HAP-1 (cell line): ENCODE measurements at regions of chr4 and their contacts with region 1.

Region 1: DNA sequence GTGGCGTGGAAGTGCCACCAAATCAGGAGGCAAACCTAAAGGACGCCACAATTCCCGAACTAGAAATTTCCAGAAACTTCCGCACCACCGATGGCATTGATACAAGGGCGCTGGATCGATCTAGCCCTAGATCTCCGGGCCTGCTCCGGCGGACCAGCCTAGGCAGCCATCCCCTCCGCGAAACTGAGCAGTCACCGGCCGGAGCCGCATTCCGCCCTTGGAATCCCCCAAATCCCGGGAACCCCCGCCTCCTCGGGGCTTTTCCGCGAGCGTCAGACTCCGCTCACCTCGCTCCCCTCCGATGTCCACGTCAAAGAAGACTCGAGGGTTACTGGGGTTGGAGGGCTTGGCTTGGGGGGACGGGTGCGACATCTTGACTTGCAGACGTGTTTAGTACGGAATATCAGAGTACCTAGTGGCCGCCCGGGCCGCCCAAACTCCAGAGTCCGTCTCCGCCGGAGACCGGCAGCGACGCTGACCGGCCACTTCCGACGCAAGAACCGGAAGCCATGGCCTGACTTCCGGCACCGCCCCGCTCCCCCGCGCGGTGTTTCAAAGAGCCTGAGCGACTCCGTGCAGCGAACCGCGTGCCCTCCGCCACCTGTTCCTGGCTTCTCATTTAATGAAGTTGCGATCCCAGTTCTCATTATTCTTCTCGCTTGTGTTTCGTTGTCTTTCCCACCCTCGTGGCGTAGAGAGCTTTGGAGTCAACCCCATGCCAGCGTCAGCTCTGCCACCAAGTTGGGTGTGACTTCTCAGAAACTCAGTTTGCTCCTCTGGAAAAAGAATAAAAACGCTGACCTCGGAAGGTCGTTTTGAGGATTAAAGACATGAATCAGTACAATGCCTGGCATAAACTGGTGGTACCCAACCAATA is at the start of gene PPID:
- DNase-seq: peak; percentile 72 to 90
- H3K4me3 ChIP-seq: peak within 1 kb of the TSS; percentile 89
- H3K4me1 ChIP-seq: peaks cover 10% of the 10 kb centered on the region
- H3K27me3 ChIP-seq: no peaks in the 10 kb centered on the region

Region 2: DNA sequence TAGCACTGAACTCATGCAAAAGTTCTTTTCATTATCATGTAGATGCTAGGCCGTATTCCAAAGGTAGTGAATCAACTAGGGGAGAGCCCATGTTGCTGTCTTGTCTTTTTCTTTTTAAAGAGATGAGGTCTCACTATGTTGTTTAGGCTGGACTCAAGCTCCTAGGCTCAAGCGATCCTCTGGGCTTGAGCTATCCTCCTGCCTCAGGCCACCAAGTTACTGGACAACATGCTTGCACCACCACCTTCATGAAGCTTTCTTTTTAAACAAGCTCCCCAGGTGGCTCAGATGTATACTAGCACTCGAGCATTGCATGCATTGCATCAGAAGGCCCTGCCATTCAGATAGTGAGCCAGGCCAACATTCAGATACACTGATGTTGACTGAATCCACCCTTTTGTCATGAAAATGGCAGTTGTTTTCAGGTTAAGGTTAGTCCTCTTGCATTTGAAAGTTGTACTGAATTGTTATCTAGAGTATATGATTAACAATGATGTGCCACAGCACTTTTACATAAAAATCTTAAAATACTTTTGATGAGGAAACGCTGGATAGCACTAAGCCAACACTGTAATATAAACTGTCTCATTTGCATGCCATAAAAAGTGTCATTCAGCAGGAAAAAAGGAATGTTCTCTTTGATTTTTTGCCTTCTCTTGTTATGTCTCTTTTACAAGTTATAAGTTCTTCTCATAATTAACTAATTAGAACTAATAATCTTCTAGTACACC is 122.3 kb after region 1 on chr4:
- in situ Hi-C with region 1: loop called (anchors 10 kb)
- DNase-seq: peak; percentile 67 to 77
- H3K4me3 ChIP-seq: no peak overlapping the region
- H3K4me1 ChIP-seq: peaks cover 17% of the 10 kb centered on the region
- H3K27me3 ChIP-seq: no peaks in the 10 kb centered on the region

Region 3: GRCh38 chr4:158873795-158874401 is 150.7 kb after region 1 on chr4:
- in situ Hi-C with region 1: no loop called
- DNase-seq: no peak
- H3K4me3 ChIP-seq: no peak overlapping the region
- H3K4me1 ChIP-seq: no peaks in the 10 kb centered on the region
- H3K27me3 ChIP-seq: no peaks in the 10 kb centered on the region

Region 4: GRCh38 chr4:159206427-159206871 is 483.3 kb after region 1 on chr4:
- in situ Hi-C with region 1: loop called (anchors 10 kb)
- DNase-seq: no peak
- H3K4me3 ChIP-seq: no peak overlapping the region
- H3K4me1 ChIP-seq: peaks cover 6% of the 10 kb centered on the region
- H3K27me3 ChIP-seq: no peaks in the 10 kb centered on the region